MCF 10A (cell line): ENCODE measurements at regions of chr19 and their contacts with region 1.

Region 1: DNA sequence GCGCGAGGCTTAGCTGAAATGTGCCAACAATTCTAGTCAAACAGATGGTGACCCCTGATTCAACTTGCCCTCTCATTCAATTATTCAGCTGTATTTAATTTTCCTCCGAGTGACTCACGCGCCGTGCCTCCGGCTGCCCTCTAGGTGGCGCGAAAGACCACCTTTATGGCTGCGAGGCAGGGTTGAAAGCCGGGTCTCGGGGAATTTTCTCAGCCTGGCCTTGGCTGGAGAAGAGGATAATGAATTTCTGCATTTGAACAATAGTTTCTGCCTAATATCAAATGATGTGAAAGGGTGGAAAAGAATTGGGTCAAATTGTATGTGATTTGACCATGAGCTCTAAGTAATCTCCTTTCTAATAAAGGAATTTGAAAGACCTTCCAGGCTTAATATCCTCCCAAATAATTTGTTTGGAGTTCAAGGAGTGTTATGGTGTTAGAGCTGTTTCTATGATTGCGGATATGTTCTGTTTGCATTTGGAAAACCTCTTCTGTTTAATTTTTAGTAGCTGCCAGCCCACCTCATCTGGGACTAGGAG is 310.9 kb downstream of the ZNF536 start:
- DNase-seq: peak; percentile 63
- H3K4me3 Mint-ChIP-seq: no peak overlapping the region
- H3K27ac Mint-ChIP-seq: no peak overlapping the region
- H3K4me1 Mint-ChIP-seq: no peaks in the 10 kb centered on the region
- H3K27me3 Mint-ChIP-seq: no peaks in the 10 kb centered on the region
- CTCF ChIP-seq: peak; percentile 75

Region 2: DNA sequence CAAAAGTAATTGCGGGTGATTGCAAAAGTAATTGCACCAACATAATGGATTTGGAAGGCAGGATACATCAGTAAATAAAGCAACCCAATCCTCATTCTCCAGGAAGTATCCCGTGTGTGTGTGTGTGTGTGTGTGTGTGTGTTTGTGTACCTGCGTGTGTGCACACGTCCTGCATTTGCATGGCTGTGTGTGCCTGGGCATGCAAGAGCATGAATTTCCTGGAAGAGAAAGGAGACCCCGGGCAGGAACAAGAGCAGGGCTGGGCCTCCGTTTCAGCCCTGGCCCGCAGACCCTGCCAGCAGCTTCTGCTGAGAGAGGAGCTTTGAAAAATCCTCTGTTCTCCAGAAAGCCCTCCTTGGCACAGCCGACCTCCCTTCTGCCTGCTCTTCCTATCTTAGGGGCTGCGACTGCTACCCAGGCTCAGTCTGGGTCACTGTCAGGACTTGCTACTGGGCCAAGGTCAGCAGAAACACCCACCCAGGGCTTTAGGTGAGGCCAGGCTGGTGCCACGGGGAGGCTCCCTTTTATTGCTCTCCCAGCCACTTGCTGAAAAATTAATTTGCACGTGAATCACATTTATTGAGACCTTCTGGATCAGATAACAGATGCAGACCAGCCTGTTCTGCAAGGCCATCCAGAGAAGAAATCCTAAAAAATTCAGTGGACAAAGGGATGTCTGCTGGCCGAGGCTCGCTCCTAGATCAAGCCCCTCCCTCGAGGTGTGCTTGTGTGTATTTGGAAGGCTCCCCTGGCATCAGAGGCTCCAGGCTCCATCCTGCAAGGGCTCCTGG is 52.6 kb before region 1 on chr19:
- CTCF ChIA-PET with region 1: no interaction called
- POLR2A ChIA-PET with region 1: no interaction called
- intact Hi-C with region 1: no loop called
- DNase-seq: no peak
- H3K4me3 Mint-ChIP-seq: no peak overlapping the region
- H3K27ac Mint-ChIP-seq: no peak overlapping the region
- H3K4me1 Mint-ChIP-seq: no peaks in the 10 kb centered on the region
- H3K27me3 Mint-ChIP-seq: no peaks in the 10 kb centered on the region
- CTCF ChIP-seq: no peak

Region 3: DNA sequence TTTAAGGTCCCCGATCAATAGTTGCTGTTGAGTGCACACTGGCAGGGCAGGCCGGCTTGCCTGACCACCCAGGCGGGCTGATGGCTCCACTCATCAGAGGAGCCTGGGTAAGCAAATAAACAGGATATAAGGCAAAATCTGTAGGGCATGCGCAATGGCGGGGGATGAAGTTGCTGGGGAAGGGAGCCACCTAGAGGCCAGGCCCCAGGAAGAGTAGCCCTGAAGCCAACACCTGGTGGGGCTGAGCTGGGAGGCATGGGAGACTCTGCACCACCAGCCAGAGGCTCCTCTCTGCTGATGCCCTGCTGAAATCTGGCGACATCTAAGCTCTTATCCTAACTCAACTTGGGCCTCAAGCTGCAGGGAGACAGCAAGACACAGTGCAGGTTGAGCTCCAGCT is 13.4 kb after region 1 on chr19:
- CTCF ChIA-PET with region 1: interaction called, 22 read pairs
- POLR2A ChIA-PET with region 1: no interaction called
- intact Hi-C with region 1: no loop called
- DNase-seq: no peak
- H3K4me3 Mint-ChIP-seq: no peak overlapping the region
- H3K27ac Mint-ChIP-seq: no peak overlapping the region
- H3K4me1 Mint-ChIP-seq: no peaks in the 10 kb centered on the region
- H3K27me3 Mint-ChIP-seq: no peaks in the 10 kb centered on the region
- CTCF ChIP-seq: no peak

Region 4: GRCh38 chr19:32373585-32374295 is 1690.7 kb after region 1 on chr19:
- CTCF ChIA-PET with region 1: interaction called, 3 read pairs
- POLR2A ChIA-PET with region 1: no interaction called
- intact Hi-C with region 1: loop called (anchors 5 kb)
- DNase-seq: peak; percentile 97
- H3K4me3 Mint-ChIP-seq: peak overlapping the region; percentile 52
- H3K27ac Mint-ChIP-seq: peak overlapping the region; percentile 72
- H3K4me1 Mint-ChIP-seq: peaks cover 22% of the 10 kb centered on the region
- H3K27me3 Mint-ChIP-seq: no peaks in the 10 kb centered on the region
- CTCF ChIP-seq: no peak